ENCODE measurements at regions of chr17 and their contacts with region 1.

Region 1: GRCh38 chr17:76523084-76524037 is 14.1 kb downstream of the CYGB start:
- DNase-seq: peak; percentile 95
- H3K4me3 ChIP-seq: peak overlapping the region in 1 of 2 experiments; percentile 38; a peak in 1 of 4 replicates
- H3K27ac ChIP-seq: no peak overlapping the region
- H3K4me1 ChIP-seq: peaks cover 0 to 26% of the 10 kb centered on the region in 2 experiments; a peak in 1 of 4 replicates
- H3K27me3 ChIP-seq: peaks cover 17% of the 10 kb centered on the region; the same call in 1 of the 2 replicates
- CTCF ChIP-seq: peak; percentile 100
- EP300 ChIP-seq: no peak
- RAD21 ChIP-seq: peak; percentile 99

Region 2: GRCh38 chr17:76408052-76408849 is 115.1 kb before region 1 on chr17:
- CTCF ChIA-PET with region 1: interaction called, 16 read pairs
- POLR2A ChIA-PET with region 1: no interaction called
- DNase-seq: peak; percentile 82
- H3K4me3 ChIP-seq: no peak overlapping the region; a peak in 1 of 4 replicates
- H3K27ac ChIP-seq: no peak overlapping the region
- H3K4me1 ChIP-seq: peaks cover 0 to 16% of the 10 kb centered on the region in 2 experiments; a peak in 2 of 4 replicates
- H3K27me3 ChIP-seq: no peaks in the 10 kb centered on the region
- CTCF ChIP-seq: peak; percentile 99
- EP300 ChIP-seq: no peak
- RAD21 ChIP-seq: peak; percentile 92

Region 3: GRCh38 chr17:76467366-76467765 is 56.0 kb before region 1 on chr17 and contains the start of gene AANAT:
- CTCF ChIA-PET with region 1: interaction called, 35 read pairs
- POLR2A ChIA-PET with region 1: no interaction called
- DNase-seq: no peak
- H3K4me3 ChIP-seq: no peak within 1 kb of the TSS
- H3K27ac ChIP-seq: no peak within 1 kb of the TSS
- H3K4me1 ChIP-seq: no peaks in the 10 kb centered on the region; a peak in 1 of 4 replicates
- H3K27me3 ChIP-seq: no peaks in the 10 kb centered on the region
- CTCF ChIP-seq: no peak
- EP300 ChIP-seq: no peak
- RAD21 ChIP-seq: no peak
- polyA plus RNA-seq, gene AANAT: 0.26 TPM in 1 of 2 replicates, not detected in the other

Region 4: GRCh38 chr17:76540381-76541300 is 17.3 kb after region 1 on chr17:
- CTCF ChIA-PET with region 1: interaction called, 679 read pairs
- POLR2A ChIA-PET with region 1: interaction called, 245 read pairs
- DNase-seq: peak; percentile 93
- H3K4me3 ChIP-seq: peak overlapping the region; percentile 37 to 41
- H3K27ac ChIP-seq: peak overlapping the region in 1 of 2 experiments; percentile 99; a peak in 2 of 4 replicates
- H3K4me1 ChIP-seq: peaks cover 10 to 88% of the 10 kb centered on the region in 2 experiments; a peak in 3 of 4 replicates
- H3K27me3 ChIP-seq: peaks cover 42% of the 10 kb centered on the region
- CTCF ChIP-seq: peak; percentile 33; the same call in 1 of the 2 replicates
- EP300 ChIP-seq: peak in 1 of 2 experiments; percentile 81; a peak in 2 of 4 replicates
- RAD21 ChIP-seq: peak; percentile 13; the same call in 1 of the 2 replicates

Region 5: GRCh38 chr17:76585818-76586593 is 62.6 kb after region 1 on chr17 and contains the start of gene ST6GALNAC2:
- CTCF ChIA-PET with region 1: interaction called, 31 read pairs
- POLR2A ChIA-PET with region 1: no interaction called
- DNase-seq: peak; percentile 94
- H3K4me3 ChIP-seq: peak within 1 kb of the TSS; percentile 46 to 57
- H3K27ac ChIP-seq: no peak within 1 kb of the TSS
- H3K4me1 ChIP-seq: peaks cover 0 to 9% of the 10 kb centered on the region in 2 experiments; a peak in 1 of 4 replicates
- H3K27me3 ChIP-seq: peaks cover 37% of the 10 kb centered on the region
- CTCF ChIP-seq: peak; percentile 38
- EP300 ChIP-seq: no peak
- RAD21 ChIP-seq: peak; percentile 65
- polyA plus RNA-seq, gene ST6GALNAC2: 0.57 and 0.94 TPM in 2 replicates

Region 6: DNA sequence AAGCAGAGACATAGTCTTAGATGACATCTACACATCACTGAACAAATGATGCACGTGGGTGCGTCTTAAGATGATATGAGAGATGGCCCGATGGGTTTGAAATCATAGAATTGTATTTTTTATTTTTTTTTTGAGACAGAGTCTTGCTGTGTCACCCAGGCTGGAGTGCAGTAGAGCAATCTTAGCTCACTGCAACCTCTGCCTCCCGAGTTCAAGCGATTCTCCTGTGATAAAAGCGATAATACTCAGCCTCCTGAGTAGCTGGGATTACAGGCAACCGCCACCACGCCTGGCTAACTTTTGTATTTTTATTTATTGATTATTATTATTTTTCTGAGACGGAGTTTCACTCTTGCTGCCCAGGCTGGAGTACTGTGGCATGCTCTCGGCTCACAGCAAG is 114.9 kb after region 1 on chr17:
- CTCF ChIA-PET with region 1: interaction called, 19 read pairs
- POLR2A ChIA-PET with region 1: no interaction called
- DNase-seq: no peak
- H3K4me3 ChIP-seq: no peak overlapping the region
- H3K27ac ChIP-seq: no peak overlapping the region
- H3K4me1 ChIP-seq: peaks cover 14 to 19% of the 10 kb centered on the region in 2 experiments
- H3K27me3 ChIP-seq: no peaks in the 10 kb centered on the region; the same call in 1 of the 2 replicates
- CTCF ChIP-seq: no peak
- EP300 ChIP-seq: no peak
- RAD21 ChIP-seq: no peak

Region 7: GRCh38 chr17:76714822-76715495 is 191.6 kb after region 1 on chr17:
- CTCF ChIA-PET with region 1: interaction called, 38 read pairs
- POLR2A ChIA-PET with region 1: no interaction called
- DNase-seq: peak; percentile 76
- H3K4me3 ChIP-seq: no peak overlapping the region
- H3K27ac ChIP-seq: peak overlapping the region in 1 of 2 experiments; percentile 97; a peak in 3 of 4 replicates
- H3K4me1 ChIP-seq: peaks cover 10 to 32% of the 10 kb centered on the region in 2 experiments
- H3K27me3 ChIP-seq: no peaks in the 10 kb centered on the region
- CTCF ChIP-seq: peak; percentile 100
- EP300 ChIP-seq: no peak
- RAD21 ChIP-seq: peak; percentile 81

Region 8: GRCh38 chr17:76753061-76753961 is 229.9 kb after region 1 on chr17:
- CTCF ChIA-PET with region 1: no interaction called
- POLR2A ChIA-PET with region 1: no interaction called
- DNase-seq: no peak
- H3K4me3 ChIP-seq: no peak overlapping the region
- H3K27ac ChIP-seq: no peak overlapping the region
- H3K4me1 ChIP-seq: no peaks in the 10 kb centered on the region
- H3K27me3 ChIP-seq: no peaks in the 10 kb centered on the region
- CTCF ChIP-seq: no peak
- EP300 ChIP-seq: no peak
- RAD21 ChIP-seq: no peak

Measured in SK-N-SH (cell line).